ENCODE measurements at regions of chr17 and their contacts with region 1.

Region 1: GRCh38 chr17:63163158-63163520 is 197.1 kb downstream of the TANC2 start:
- DNase-seq: no peak
- ATAC-seq: no peak
- H3K4me3 ChIP-seq: no peak overlapping the region
- H3K27ac ChIP-seq: no peak overlapping the region
- H3K4me1 ChIP-seq: no peaks in the 10 kb centered on the region
- H3K27me3 ChIP-seq: no peaks in the 10 kb centered on the region
- CTCF ChIP-seq: no peak

Region 2: GRCh38 chr17:63142836-63143235 is 20.3 kb before region 1 on chr17:
- CTCF ChIA-PET with region 1: no interaction called
- POLR2A ChIA-PET with region 1: no interaction called
- in situ Hi-C with region 1: no loop called
- intact Hi-C with region 1: no loop called
- DNase-seq: no peak
- ATAC-seq: no peak
- H3K4me3 ChIP-seq: no peak overlapping the region
- H3K27ac ChIP-seq: no peak overlapping the region; the same call in 1 of the 2 replicates
- H3K4me1 ChIP-seq: no peaks in the 10 kb centered on the region
- H3K27me3 ChIP-seq: no peaks in the 10 kb centered on the region
- CTCF ChIP-seq: no peak

Region 3: DNA sequence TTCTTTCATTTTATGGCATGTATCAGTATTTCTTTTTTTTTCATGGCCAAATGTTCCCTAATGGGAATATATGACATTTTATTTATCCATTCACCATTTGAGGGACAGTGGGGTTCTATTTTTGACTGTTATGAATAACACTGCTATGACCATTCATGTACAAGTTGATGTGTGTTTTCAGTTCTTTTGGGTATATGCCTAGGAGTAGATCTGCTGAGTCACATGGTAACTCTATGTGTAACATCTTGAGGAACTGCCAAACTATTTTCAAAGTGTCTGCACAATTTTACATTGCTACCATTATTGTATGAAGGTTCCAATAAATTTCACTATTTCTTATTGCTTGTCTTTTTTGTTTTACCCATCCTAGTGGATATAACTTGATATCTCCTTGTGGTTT is 25.9 kb after region 1 on chr17:
- CTCF ChIA-PET with region 1: no interaction called
- POLR2A ChIA-PET with region 1: interaction called, 12 read pairs
- in situ Hi-C with region 1: no loop called
- intact Hi-C with region 1: no loop called
- DNase-seq: peak; percentile 5
- ATAC-seq: no peak
- H3K4me3 ChIP-seq: no peak overlapping the region
- H3K27ac ChIP-seq: no peak overlapping the region; the same call in 1 of the 2 replicates
- H3K4me1 ChIP-seq: no peaks in the 10 kb centered on the region
- H3K27me3 ChIP-seq: no peaks in the 10 kb centered on the region
- CTCF ChIP-seq: no peak

Measured in Panc1 (cell line).